Caco-2 (cell line): ENCODE measurements at regions of chr6 and their contacts with region 1.

Region 1: GRCh38 chr6:26216356-26216885 is 129.2 kb downstream of the HFE start:
- DNase-seq: peak in 1 of 2 experiments; percentile 85
- H3K4me3 ChIP-seq: peak overlapping the region; percentile 66
- H3K4me3 Mint-ChIP-seq: no peak overlapping the region
- H3K27ac Mint-ChIP-seq: no peak overlapping the region
- H3K4me1 ChIP-seq: no peaks in the 10 kb centered on the region
- H3K4me1 Mint-ChIP-seq: no peaks in the 10 kb centered on the region
- H3K27me3 ChIP-seq: no peaks in the 10 kb centered on the region
- H3K27me3 Mint-ChIP-seq: no peaks in the 10 kb centered on the region
- CTCF ChIP-seq: no peak

Region 2: DNA sequence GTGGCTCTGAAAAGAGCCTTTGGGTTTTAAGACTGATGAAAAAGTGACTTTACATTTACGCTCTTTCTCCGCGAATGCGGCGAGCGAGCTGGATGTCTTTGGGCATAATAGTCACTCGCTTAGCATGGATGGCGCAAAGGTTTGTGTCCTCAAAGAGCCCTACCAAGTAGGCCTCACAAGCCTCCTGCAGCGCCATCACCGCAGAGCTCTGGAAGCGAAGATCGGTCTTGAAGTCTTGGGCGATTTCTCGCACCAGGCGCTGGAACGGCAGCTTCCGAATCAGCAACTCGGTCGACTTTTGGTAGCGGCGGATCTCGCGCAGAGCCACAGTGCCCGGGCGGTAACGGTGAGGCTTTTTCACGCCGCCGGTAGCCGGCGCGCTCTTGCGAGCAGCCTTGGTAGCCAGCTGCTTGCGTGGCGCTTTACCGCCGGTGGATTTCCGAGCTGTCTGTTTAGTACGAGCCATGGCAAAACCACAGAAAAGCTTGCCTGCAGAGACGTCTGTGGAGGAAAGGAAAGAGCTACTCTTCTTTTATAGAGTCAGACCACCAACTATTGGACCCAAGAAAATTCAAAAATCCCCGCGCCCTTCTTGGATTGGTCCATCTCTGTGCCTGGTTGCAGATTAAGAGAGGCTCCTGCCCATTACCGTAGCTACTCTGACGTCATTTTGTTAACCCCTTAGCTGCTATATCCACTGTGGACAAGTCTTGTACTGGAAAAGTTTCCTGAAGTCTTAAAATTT is 184.7 kb before region 1 on chr6:
- CTCF ChIA-PET with region 1: no interaction called
- POLR2A ChIA-PET with region 1: interaction called, 11 read pairs
- intact Hi-C with region 1: no loop called
- DNase-seq: peak; percentile 95 to 96
- H3K4me3 ChIP-seq: peak overlapping the region; percentile 66
- H3K4me3 Mint-ChIP-seq: peak overlapping the region; percentile 87
- H3K27ac Mint-ChIP-seq: peak overlapping the region; percentile 100
- H3K4me1 ChIP-seq: peaks cover 9% of the 10 kb centered on the region
- H3K4me1 Mint-ChIP-seq: peaks cover 51% of the 10 kb centered on the region
- H3K27me3 ChIP-seq: no peaks in the 10 kb centered on the region
- H3K27me3 Mint-ChIP-seq: peaks cover 4% of the 10 kb centered on the region
- CTCF ChIP-seq: no peak

Region 3: GRCh38 chr6:26122793-26123674 is 93.4 kb before region 1 on chr6:
- CTCF ChIA-PET with region 1: no interaction called
- POLR2A ChIA-PET with region 1: interaction called, 52 read pairs
- intact Hi-C with region 1: no loop called
- DNase-seq: peak; percentile 96 to 98
- H3K4me3 ChIP-seq: peak overlapping the region; percentile 44
- H3K4me3 Mint-ChIP-seq: peak overlapping the region; percentile 90
- H3K27ac Mint-ChIP-seq: peak overlapping the region; percentile 99
- H3K4me1 ChIP-seq: peaks cover 23% of the 10 kb centered on the region
- H3K4me1 Mint-ChIP-seq: peaks cover 36% of the 10 kb centered on the region
- H3K27me3 ChIP-seq: no peaks in the 10 kb centered on the region
- H3K27me3 Mint-ChIP-seq: no peaks in the 10 kb centered on the region
- CTCF ChIP-seq: no peak

Region 4: DNA sequence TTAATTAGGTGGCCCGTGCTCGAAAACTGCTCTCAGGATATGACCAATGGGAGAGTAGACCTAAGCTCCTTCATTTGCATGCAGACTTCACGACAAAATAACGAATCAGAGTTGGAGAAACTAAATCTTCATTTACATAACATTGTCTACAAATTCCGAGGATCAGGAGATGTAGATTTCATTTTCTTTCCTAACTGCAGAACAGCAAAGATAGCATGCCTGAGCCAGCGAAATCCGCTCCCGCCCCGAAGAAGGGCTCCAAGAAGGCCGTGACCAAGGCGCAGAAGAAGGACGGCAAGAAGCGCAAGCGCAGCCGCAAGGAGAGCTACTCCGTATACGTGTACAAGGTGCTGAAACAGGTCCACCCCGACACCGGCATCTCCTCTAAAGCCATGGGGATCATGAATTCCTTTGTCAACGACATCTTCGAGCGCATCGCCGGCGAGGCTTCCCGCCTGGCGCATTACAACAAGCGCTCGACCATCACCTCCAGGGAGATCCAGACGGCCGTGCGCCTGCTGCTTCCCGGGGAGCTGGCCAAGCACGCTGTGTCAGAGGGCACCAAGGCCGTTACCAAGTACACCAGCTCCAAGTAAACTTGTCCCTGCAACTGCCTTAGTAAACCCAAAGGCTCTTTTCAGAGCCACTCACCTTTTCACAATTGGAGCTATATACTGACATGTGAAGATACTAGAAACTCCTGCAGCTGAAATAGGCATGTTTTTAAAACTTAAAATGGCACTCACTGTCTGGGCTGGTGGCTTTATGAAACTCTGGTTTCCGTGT is 32.6 kb before region 1 on chr6:
- CTCF ChIA-PET with region 1: no interaction called
- POLR2A ChIA-PET with region 1: interaction called, 27 read pairs
- intact Hi-C with region 1: no loop called
- DNase-seq: peak; percentile 61 to 63
- H3K4me3 ChIP-seq: peak overlapping the region; percentile 41
- H3K4me3 Mint-ChIP-seq: peak overlapping the region; percentile 52
- H3K27ac Mint-ChIP-seq: peak overlapping the region; percentile 88
- H3K4me1 ChIP-seq: peaks cover 3% of the 10 kb centered on the region; the same call in 1 of the 2 replicates
- H3K4me1 Mint-ChIP-seq: peaks cover 25% of the 10 kb centered on the region
- H3K27me3 ChIP-seq: no peaks in the 10 kb centered on the region
- H3K27me3 Mint-ChIP-seq: no peaks in the 10 kb centered on the region
- CTCF ChIP-seq: no peak

Region 5: GRCh38 chr6:26234421-26235296 is 18.2 kb after region 1 on chr6:
- CTCF ChIA-PET with region 1: no interaction called
- POLR2A ChIA-PET with region 1: interaction called, 55 read pairs
- intact Hi-C with region 1: no loop called
- DNase-seq: peak; percentile 79 to 81
- H3K4me3 ChIP-seq: peak overlapping the region; percentile 52
- H3K4me3 Mint-ChIP-seq: peak overlapping the region; percentile 76
- H3K27ac Mint-ChIP-seq: peak overlapping the region; percentile 92
- H3K4me1 ChIP-seq: peaks cover 11% of the 10 kb centered on the region; the same call in 1 of the 2 replicates
- H3K4me1 Mint-ChIP-seq: no peaks in the 10 kb centered on the region
- H3K27me3 ChIP-seq: no peaks in the 10 kb centered on the region
- H3K27me3 Mint-ChIP-seq: no peaks in the 10 kb centered on the region
- CTCF ChIP-seq: no peak

Region 6: DNA sequence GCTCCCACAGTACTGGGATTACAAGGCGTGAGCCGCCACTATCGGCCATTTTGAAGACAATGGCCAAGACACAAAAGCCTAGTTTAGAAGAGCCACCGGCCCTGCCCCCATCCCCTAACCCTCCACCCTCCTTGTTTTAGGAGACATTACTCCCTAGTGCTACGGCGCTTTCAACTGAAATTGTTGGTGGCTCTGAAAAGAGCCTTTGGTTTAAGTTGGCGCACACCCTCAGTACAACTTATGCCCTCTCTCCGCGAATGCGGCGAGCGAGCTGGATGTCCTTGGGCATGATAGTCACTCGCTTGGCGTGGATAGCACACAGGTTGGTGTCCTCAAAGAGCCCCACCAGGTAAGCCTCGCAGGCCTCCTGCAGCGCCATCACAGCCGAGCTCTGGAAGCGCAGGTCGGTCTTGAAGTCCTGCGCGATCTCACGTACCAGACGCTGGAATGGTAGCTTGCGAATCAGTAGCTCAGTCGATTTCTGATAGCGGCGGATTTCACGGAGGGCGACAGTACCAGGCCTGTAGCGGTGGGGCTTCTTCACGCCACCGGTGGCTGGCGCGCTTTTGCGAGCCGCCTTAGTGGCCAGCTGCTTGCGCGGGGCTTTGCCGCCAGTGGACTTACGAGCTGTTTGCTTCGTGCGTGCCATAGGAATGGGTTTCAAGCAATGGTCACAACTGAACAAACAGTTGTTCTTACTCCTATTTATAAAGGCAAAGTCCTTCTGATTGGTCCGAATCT is 33.7 kb after region 1 on chr6:
- CTCF ChIA-PET with region 1: interaction called, 11 read pairs
- POLR2A ChIA-PET with region 1: interaction called, 40 read pairs
- intact Hi-C with region 1: loop called (anchors 1 kb)
- DNase-seq: peak; percentile 81 to 84
- H3K4me3 ChIP-seq: peak overlapping the region; percentile 97
- H3K4me3 Mint-ChIP-seq: peak overlapping the region; percentile 71
- H3K27ac Mint-ChIP-seq: peak overlapping the region; percentile 71
- H3K4me1 ChIP-seq: peaks cover 10% of the 10 kb centered on the region; the same call in 1 of the 2 replicates
- H3K4me1 Mint-ChIP-seq: peaks cover 13% of the 10 kb centered on the region
- H3K27me3 ChIP-seq: no peaks in the 10 kb centered on the region
- H3K27me3 Mint-ChIP-seq: peaks cover 3% of the 10 kb centered on the region
- CTCF ChIP-seq: peak in 1 of 2 experiments; percentile 42

Region 7: DNA sequence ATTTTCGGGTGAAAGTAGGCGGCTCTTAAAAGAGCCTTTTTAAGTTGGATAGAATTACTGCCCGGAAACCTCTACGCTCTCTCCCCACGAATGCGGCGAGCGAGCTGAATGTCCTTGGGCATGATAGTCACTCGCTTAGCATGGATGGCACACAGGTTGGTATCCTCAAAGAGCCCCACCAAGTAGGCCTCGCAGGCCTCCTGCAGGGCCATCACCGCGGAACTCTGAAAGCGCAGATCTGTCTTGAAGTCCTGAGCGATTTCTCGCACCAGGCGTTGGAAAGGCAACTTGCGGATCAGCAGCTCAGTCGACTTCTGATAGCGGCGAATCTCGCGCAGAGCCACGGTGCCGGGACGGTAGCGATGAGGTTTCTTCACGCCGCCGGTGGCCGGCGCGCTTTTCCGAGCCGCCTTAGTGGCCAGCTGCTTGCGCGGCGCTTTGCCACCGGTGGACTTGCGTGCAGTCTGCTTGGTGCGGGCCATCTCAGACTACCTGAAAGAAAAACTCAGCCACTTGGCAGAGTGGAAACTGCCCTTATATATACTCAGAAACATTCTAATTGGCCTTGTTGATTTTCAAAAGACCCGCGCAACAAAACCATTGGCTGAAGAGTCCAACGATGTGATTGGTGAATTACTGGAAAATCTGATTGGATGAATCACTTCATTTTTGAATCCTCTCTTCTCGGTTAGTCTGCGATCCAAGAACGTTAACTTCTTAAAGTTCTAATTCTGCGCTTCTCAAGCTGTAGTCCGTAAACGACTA is 54.7 kb after region 1 on chr6:
- CTCF ChIA-PET with region 1: interaction called, 16 read pairs
- POLR2A ChIA-PET with region 1: interaction called, 182 read pairs
- intact Hi-C with region 1: loop called (anchors 1 kb)
- DNase-seq: peak; percentile 86 to 88
- H3K4me3 ChIP-seq: peak overlapping the region; percentile 50
- H3K4me3 Mint-ChIP-seq: no peak overlapping the region
- H3K27ac Mint-ChIP-seq: no peak overlapping the region
- H3K4me1 ChIP-seq: peaks cover 19% of the 10 kb centered on the region
- H3K4me1 Mint-ChIP-seq: peaks cover 19% of the 10 kb centered on the region
- H3K27me3 ChIP-seq: no peaks in the 10 kb centered on the region
- H3K27me3 Mint-ChIP-seq: no peaks in the 10 kb centered on the region
- CTCF ChIP-seq: no peak

Region 8: GRCh38 chr6:26295691-26296555 is 79.5 kb after region 1 on chr6:
- CTCF ChIA-PET with region 1: no interaction called
- POLR2A ChIA-PET with region 1: no interaction called
- intact Hi-C with region 1: no loop called
- DNase-seq: peak in 1 of 2 experiments; percentile 41
- H3K4me3 ChIP-seq: no peak overlapping the region
- H3K4me3 Mint-ChIP-seq: peak overlapping the region; percentile 31
- H3K27ac Mint-ChIP-seq: no peak overlapping the region
- H3K4me1 ChIP-seq: 0 out of 2 replicates have a peak, but pooled peaks cover 9% of the 10 kb centered on the region
- H3K4me1 Mint-ChIP-seq: no peaks in the 10 kb centered on the region
- H3K27me3 ChIP-seq: no peaks in the 10 kb centered on the region
- H3K27me3 Mint-ChIP-seq: no peaks in the 10 kb centered on the region
- CTCF ChIP-seq: no peak